Calu3 (cell line): ENCODE measurements at regions of chr14 and their contacts with region 1.

Region 1: GRCh38 chr14:71320107-71320733 is 413.0 kb downstream of the PCNX1 start:
- DNase-seq: peak; percentile 97
- H3K4me3 Mint-ChIP-seq: peak within 1 kb of the TSS; percentile 99
- H3K27ac Mint-ChIP-seq: peak within 1 kb of the TSS; percentile 91
- H3K4me1 Mint-ChIP-seq: peaks cover 27% of the 10 kb centered on the region
- H3K27me3 Mint-ChIP-seq: no peaks in the 10 kb centered on the region
- CTCF ChIP-seq: no peak

Region 2: DNA sequence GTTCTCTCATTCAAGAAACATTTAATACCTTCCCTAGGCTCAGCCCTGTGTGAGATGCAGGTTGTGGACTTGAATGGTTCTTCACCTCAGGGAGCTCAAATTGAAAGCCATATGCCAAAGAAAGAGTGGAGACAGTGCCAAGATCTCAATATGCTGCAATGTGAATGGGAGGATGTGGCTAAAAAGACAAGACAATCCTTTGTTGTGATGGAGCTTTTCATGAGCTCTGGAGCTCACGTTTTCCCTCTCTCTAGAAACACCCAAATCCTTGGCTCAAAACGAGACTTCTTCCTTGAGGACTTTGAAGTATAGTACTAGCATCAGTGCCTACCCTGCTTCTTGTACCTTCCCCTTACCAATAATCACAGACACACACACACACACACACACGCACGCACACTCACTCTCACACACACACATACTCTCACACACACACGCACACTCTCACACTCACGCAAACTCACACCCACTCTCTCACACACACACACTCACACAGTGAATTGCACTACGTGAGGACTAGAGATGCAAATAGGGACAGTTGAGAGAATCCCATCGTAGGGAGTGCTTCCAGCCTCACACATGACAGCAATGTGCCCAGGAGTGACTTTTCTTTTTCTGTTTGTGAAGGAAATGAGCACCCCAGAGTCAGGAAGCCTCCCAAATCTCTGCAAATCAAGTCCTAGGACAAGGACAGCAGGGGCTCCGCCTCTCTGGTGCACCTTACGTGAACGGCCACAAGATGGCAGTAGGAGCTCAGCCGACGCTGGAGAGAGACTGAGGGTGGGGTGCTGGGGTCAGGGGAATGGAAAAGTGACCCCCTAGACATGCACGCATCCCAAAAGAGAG is 181.5 kb before region 1 on chr14:
- CTCF ChIA-PET with region 1: interaction called, 4 read pairs
- intact Hi-C with region 1: loop called (anchors 2 kb)
- DNase-seq: peak; percentile 67
- H3K4me3 Mint-ChIP-seq: no peak overlapping the region
- H3K27ac Mint-ChIP-seq: no peak overlapping the region
- H3K4me1 Mint-ChIP-seq: peaks cover 8% of the 10 kb centered on the region
- H3K27me3 Mint-ChIP-seq: no peaks in the 10 kb centered on the region
- CTCF ChIP-seq: peak; percentile 89

Region 3: DNA sequence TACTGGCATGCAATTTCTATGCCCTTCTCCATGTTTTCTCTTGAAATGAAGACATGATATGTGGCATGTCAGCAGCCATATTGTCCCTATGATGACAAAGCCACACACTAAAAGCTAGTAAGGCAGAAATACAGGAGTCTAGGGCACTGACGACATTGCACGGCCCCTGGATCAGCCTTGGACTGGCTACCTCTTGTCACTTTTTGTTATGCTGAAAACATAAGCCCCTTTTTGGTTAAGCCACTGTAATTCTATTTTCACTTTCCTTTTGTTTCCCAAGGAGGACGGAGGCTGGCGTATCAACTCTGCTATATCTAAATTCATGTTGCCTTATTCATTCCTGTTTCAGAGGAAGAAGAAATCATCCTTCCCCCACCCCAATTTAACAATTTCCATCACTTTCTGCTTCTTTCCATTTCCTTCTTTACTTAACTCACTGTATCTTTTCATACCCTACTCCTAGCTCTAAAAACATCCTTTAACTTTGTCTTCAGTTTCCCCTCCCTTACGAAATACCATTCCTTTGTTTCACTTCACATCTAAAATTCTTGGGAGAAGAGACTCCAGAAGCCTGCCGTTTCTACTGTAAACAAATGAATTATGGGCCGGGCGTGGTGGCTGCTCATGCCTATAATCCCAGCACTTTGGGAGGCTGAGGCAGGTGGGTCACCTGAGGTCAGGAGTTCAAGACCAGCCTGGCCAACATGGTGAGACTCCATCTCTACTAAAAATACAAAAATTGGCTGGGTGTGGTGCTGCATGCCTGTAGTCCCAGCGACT is 48.9 kb before region 1 on chr14:
- CTCF ChIA-PET with region 1: no interaction called
- intact Hi-C with region 1: no loop called
- DNase-seq: no peak
- H3K4me3 Mint-ChIP-seq: no peak overlapping the region
- H3K27ac Mint-ChIP-seq: no peak overlapping the region
- H3K4me1 Mint-ChIP-seq: no peaks in the 10 kb centered on the region
- H3K27me3 Mint-ChIP-seq: peaks cover 7% of the 10 kb centered on the region
- CTCF ChIP-seq: no peak

Region 4: DNA sequence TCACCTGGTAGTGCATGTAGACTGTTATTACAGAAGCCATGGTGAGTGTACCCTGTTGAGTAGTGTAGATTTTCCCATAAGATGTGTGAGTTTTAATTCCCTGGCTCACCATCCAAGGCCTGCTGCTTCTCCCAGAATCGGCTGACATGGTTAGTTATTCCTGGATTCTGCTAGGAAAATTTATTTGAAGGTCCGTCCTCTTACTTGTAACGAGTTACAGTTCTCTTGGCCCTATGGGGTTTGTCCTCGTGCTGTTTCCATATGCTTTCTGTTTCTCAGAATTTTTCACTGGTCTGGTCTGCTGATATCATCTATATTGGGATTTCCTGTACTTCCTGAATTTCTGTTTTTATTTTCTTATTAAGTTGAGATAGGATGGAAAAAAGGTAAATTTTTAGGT is 188.7 kb after region 1 on chr14:
- CTCF ChIA-PET with region 1: no interaction called
- intact Hi-C with region 1: loop called (anchors 10 kb)
- DNase-seq: no peak
- H3K4me3 Mint-ChIP-seq: no peak overlapping the region
- H3K27ac Mint-ChIP-seq: no peak overlapping the region
- H3K4me1 Mint-ChIP-seq: peaks cover 8% of the 10 kb centered on the region
- H3K27me3 Mint-ChIP-seq: no peaks in the 10 kb centered on the region
- CTCF ChIP-seq: no peak

Region 5: DNA sequence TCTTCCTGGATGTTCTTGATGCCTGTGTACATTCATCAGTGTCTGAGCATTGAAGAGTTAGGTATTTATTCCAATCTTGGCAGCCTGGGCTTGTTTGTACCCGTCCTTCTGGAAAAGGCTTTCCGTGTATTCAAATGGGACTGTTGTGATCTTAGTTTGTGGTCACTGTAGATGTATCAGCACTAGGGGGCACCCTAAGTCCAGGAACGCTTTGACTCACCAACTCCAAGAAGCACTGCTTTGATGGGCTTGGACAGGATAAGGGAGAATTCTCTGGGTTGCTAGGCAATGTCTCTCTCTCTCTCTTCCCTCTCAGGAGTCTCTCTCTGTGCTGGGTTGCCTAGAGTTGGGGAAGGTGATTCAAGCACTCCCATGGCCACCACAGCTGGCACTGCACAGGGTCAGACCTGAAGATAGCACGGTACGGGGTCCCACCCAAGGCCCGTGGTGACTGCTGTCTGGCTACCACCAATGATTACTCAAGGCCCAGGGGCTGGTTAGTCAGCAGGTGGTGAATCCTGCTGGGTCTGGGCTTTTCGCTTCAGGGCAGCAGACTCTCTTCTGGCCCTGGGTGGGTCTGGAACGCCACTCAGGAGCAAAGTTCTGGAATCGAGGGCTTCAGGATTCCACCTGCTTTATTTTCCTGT is 400.9 kb after region 1 on chr14:
- CTCF ChIA-PET with region 1: no interaction called
- intact Hi-C with region 1: loop called (anchors 10 kb)
- DNase-seq: peak; percentile 64
- H3K4me3 Mint-ChIP-seq: no peak overlapping the region
- H3K27ac Mint-ChIP-seq: no peak overlapping the region
- H3K4me1 Mint-ChIP-seq: no peaks in the 10 kb centered on the region
- H3K27me3 Mint-ChIP-seq: no peaks in the 10 kb centered on the region
- CTCF ChIP-seq: peak; percentile 36

Region 6: GRCh38 chr14:71855399-71856036 is 535.3 kb after region 1 on chr14:
- CTCF ChIA-PET with region 1: no interaction called
- intact Hi-C with region 1: loop called (anchors 10 kb)
- DNase-seq: peak; percentile 86
- H3K4me3 Mint-ChIP-seq: no peak overlapping the region
- H3K27ac Mint-ChIP-seq: no peak overlapping the region
- H3K4me1 Mint-ChIP-seq: no peaks in the 10 kb centered on the region
- H3K27me3 Mint-ChIP-seq: peaks cover 30% of the 10 kb centered on the region
- CTCF ChIP-seq: peak; percentile 64